Posterior vena cava (tissue), 2 donors: ENCODE measurements at regions of chr5 and their contacts with region 1.

Region 1: DNA sequence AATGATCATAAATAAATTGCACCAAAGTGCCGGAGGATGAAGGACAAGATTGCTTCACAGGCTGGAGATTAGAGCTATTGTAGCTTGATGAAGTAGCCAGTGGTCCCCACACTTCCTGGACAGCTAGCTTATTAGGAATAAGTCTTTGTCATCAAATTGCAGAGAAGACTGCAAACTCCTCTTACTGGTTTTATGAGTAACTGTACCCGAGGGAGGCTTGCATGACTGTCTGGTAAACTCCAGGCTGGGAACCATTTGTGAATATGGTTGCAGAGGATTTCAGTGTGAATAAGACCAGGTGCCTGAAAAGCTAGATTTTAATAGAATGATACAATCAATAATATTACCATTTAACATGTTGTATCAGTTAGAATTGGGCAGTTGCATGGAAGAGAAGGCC is 36.5 kb upstream of the SEMA5A start:
- DNase-seq: no peak

Region 2: GRCh38 chr5:9562141-9562540 is 20.3 kb before region 1 on chr5:
- intact Hi-C with region 1: no loop called
- DNase-seq: no peak

Region 3: DNA sequence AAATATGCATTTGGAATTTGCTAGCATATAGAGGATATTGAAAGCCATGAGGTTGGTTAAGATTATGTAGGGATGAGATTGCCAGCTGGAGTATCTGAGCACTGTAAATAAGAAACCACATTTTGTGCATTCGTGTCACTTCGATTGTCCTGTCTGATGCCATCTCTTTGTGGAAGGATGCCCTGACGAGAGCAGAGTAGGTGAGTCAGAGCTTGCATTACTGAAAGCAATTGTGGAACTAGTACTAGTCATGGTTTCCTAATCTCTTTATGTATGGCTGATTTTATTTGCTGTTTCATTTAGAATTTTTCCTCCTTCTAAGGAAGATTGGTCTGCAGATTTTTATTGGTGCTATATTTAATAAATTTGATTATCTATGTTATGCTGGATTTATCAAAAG is 62.2 kb after region 1 on chr5:
- intact Hi-C with region 1: no loop called
- DNase-seq: no peak

Region 4: GRCh38 chr5:10789021-10789420 is 1206.6 kb after region 1 on chr5:
- intact Hi-C with region 1: loop called in 1 of 2 experiments (anchors 10 kb)
- DNase-seq: peak; percentile 84